ENCODE measurements at regions of chr16 and their contacts with region 1.

Region 1: GRCh38 chr16:13919683-13920509 is at the start of gene ERCC4:
- DNase-seq: peak; percentile 99
- H3K4me3 ChIP-seq: peak within 1 kb of the TSS; percentile 82 to 90 (median 86)
- H3K27ac ChIP-seq: peak within 1 kb of the TSS; percentile 18; the same call in 1 of the 2 replicates
- H3K4me1 ChIP-seq: peaks cover 0 to 7% (median 3%) of the 10 kb centered on the region in 4 experiments; a peak in 4 of 7 replicates
- H3K27me3 ChIP-seq: no peaks in the 10 kb centered on the region; a peak in 1 of 7 replicates
- CTCF ChIP-seq: peak; percentile 83 to 99 (median 87)
- EP300 ChIP-seq: no peak
- POLR2A ChIP-seq: peak in 1 of 2 experiments; percentile 67; a peak in 2 of 3 replicates
- RAD21 ChIP-seq: peak; percentile 38 to 41; a peak in 2 of 4 replicates
- total RNA-seq, gene ERCC4: 13.0 and 13.2 TPM in 2 replicates

Region 2: DNA sequence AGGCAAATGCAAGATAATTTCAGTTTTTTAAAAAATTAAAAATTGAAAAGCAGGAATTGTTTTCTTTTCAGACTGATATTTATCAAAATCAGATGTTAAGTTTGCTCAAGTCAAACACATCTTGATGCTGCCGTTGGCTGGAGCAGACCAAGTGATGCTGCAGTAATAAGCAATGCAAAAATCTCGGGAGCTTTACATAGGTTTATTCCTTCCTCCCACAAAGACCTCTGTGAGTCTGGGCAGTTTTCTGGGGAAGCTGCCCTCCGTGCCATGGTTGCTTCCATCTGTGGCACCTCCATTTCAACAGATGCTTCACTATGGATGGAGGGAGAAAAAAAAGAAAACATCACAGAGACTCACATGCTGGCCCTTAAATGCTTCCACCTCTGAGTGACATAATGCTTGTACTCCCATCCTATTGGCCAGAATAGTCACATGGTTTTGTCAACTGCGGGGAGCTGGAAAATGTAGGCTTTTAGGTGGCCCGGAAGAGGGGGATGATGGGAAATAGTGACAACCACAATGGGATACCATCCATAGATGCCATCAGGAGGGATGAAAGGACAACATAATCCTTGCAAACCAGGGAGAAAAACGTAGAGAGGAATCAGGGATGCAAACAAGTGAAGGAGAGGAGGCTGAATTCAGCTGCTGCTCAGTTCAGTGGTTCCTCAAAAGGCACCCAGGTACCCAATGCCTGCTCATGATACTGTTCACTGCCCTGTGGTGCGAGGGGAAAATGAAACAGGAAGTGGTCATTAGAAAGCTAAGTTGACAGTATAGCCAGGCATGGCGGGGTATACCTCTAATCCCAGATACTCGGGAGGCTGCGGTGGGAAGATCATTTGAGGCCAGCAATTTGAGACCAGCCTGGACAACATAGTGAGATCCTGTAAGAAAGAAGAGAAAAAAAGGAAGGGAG is 13.5 kb before region 1 on chr16:
- CTCF ChIA-PET with region 1: interaction called, 11 read pairs
- POLR2A ChIA-PET with region 1: interaction called, 4 read pairs
- DNase-seq: no peak
- H3K4me3 ChIP-seq: no peak overlapping the region
- H3K27ac ChIP-seq: no peak overlapping the region
- H3K4me1 ChIP-seq: no peaks in the 10 kb centered on the region
- H3K27me3 ChIP-seq: no peaks in the 10 kb centered on the region
- CTCF ChIP-seq: no peak
- EP300 ChIP-seq: no peak
- POLR2A ChIP-seq: no peak
- RAD21 ChIP-seq: no peak

Region 3: DNA sequence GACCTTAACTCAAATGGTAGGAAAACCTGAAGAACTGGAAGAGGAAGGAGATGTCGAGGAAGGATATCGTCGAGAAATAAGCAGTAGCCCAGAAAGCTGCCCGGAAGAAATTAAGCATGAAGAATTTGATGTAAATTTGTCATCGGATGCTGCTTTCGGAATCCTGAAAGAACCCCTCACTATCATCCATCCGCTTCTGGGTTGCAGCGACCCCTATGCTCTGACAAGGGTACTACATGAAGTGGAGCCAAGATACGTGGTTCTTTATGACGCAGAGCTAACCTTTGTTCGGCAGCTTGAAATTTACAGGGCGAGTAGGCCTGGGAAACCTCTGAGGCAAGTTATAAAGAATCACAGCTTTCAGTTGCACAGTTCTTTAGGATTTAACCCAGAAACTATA is 15.5 kb after region 1 on chr16:
- CTCF ChIA-PET with region 1: interaction called, 39 read pairs
- POLR2A ChIA-PET with region 1: interaction called, 10 read pairs
- DNase-seq: peak in 1 of 2 experiments; percentile 91
- H3K4me3 ChIP-seq: no peak overlapping the region
- H3K27ac ChIP-seq: no peak overlapping the region
- H3K4me1 ChIP-seq: no peaks in the 10 kb centered on the region
- H3K27me3 ChIP-seq: no peaks in the 10 kb centered on the region
- CTCF ChIP-seq: peak; percentile 70 to 96 (median 74)
- EP300 ChIP-seq: no peak
- POLR2A ChIP-seq: no peak
- RAD21 ChIP-seq: peak; percentile 55 to 67

Region 4: DNA sequence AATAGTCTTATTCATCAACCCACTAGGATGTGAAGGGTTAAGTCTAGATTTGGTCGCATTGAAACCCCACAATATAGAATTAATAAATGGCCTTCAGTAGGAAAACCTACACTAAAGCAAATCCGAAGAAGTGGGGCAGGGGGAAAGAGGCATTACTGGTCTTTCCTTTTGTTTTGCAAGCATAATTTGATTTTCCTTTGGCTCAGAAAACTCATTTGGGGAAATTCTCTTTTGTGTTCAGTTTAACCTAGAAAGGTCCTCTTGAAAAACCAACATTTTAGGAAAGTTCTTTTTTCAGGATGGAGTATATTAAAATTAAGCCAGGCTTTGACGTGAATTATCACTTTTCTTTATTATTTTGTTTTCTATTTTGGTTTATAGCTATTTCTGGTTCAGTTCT is 31.7 kb after region 1 on chr16:
- CTCF ChIA-PET with region 1: no interaction called
- POLR2A ChIA-PET with region 1: no interaction called
- DNase-seq: no peak
- H3K4me3 ChIP-seq: no peak overlapping the region
- H3K27ac ChIP-seq: no peak overlapping the region
- H3K4me1 ChIP-seq: peaks cover 0 to 2% (median 0%) of the 10 kb centered on the region in 4 experiments; a peak in 3 of 7 replicates
- H3K27me3 ChIP-seq: no peaks in the 10 kb centered on the region
- CTCF ChIP-seq: no peak
- EP300 ChIP-seq: no peak
- POLR2A ChIP-seq: no peak
- RAD21 ChIP-seq: no peak

Region 5: GRCh38 chr16:14088155-14088753 is 168.4 kb after region 1 on chr16:
- CTCF ChIA-PET with region 1: no interaction called
- POLR2A ChIA-PET with region 1: no interaction called
- DNase-seq: no peak
- H3K4me3 ChIP-seq: no peak overlapping the region
- H3K27ac ChIP-seq: no peak overlapping the region
- H3K4me1 ChIP-seq: no peaks in the 10 kb centered on the region
- H3K27me3 ChIP-seq: no peaks in the 10 kb centered on the region
- CTCF ChIP-seq: no peak
- EP300 ChIP-seq: no peak
- POLR2A ChIP-seq: no peak
- RAD21 ChIP-seq: no peak

Region 6: GRCh38 chr16:14168146-14168545 is 248.2 kb after region 1 on chr16:
- CTCF ChIA-PET with region 1: no interaction called
- POLR2A ChIA-PET with region 1: no interaction called
- DNase-seq: no peak
- H3K4me3 ChIP-seq: no peak overlapping the region
- H3K27ac ChIP-seq: no peak overlapping the region
- H3K4me1 ChIP-seq: no peaks in the 10 kb centered on the region
- H3K27me3 ChIP-seq: no peaks in the 10 kb centered on the region
- CTCF ChIP-seq: no peak
- EP300 ChIP-seq: no peak
- POLR2A ChIP-seq: no peak
- RAD21 ChIP-seq: no peak

Region 7: DNA sequence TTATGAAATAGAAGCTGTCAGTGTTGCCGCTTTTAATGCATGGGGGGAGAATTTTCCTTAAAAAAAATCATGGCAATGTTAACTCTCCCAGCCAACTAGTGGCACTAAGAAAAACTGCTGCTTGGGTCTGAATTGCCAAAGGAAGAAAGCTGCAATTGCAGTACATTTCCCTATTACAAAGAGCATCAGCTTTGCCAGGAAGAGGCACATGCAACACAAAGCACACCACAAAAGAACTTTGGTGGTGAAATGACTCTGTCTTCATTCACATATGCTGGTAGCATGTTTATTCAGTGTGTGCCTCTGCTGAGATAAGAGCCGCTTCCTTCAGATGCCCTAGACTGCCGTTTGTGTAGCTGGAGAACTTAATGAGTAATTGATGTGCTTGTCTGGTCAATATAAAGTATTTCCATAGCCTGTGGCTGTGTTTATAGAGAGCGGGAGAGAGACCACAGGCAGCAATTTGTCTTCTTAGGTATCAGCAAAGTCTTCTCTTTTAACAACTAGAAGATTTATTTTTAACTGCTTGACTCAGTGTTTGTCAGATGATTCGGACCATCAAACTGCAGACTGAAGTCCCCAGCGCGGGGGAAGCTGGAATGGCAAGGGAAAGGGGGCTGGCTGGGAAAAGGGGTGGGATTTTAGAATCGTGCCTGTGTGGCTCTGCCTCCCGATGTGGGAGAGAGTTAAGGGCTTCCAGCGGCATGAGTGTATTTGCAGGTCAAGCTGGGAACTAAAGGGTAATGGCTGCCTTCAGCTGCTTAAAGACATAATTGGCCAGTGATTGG is 266.3 kb after region 1 on chr16:
- CTCF ChIA-PET with region 1: interaction called, 11 read pairs
- POLR2A ChIA-PET with region 1: no interaction called
- DNase-seq: peak; percentile 13 to 63
- H3K4me3 ChIP-seq: peak overlapping the region; percentile 4 to 32 (median 26); a peak in 5 of 8 replicates
- H3K27ac ChIP-seq: no peak overlapping the region
- H3K4me1 ChIP-seq: peaks cover 3 to 12% (median 7%) of the 10 kb centered on the region in 4 experiments
- H3K27me3 ChIP-seq: no peaks in the 10 kb centered on the region
- CTCF ChIP-seq: peak in 2 of 3 experiments; percentile 46 to 55; a peak in 2 of 4 replicates
- EP300 ChIP-seq: no peak
- POLR2A ChIP-seq: no peak
- RAD21 ChIP-seq: peak; percentile 30 to 42; a peak in 3 of 4 replicates

Region 8: GRCh38 chr16:14285513-14286385 is 365.9 kb after region 1 on chr16:
- CTCF ChIA-PET with region 1: interaction called, 10 read pairs
- POLR2A ChIA-PET with region 1: interaction called, 8 read pairs
- DNase-seq: peak; percentile 87 to 100
- H3K4me3 ChIP-seq: peak overlapping the region; percentile 65 to 92 (median 72)
- H3K27ac ChIP-seq: no peak overlapping the region
- H3K4me1 ChIP-seq: peaks cover 2 to 17% (median 11%) of the 10 kb centered on the region in 4 experiments
- H3K27me3 ChIP-seq: no peaks in the 10 kb centered on the region
- CTCF ChIP-seq: no peak
- EP300 ChIP-seq: no peak; a peak in 1 of 3 replicates
- POLR2A ChIP-seq: no peak
- RAD21 ChIP-seq: no peak

Measured in H1 (cell line).